ENCODE measurements at regions of chr4 and their contacts with region 1.

Region 1: GRCh38 chr4:44817930-44818329 is 91.6 kb upstream of the GNPDA2 start:
- DNase-seq: no peak
- ATAC-seq: peak; percentile 67 to 96 (median 91)
- H3K4me3 ChIP-seq: no peak overlapping the region
- H3K27ac ChIP-seq: peak overlapping the region; percentile 44 to 86 (median 73)
- H3K4me1 ChIP-seq: peaks cover 0 to 7% (median 0%) of the 10 kb centered on the region in 9 donors
- H3K27me3 ChIP-seq: no peaks in the 10 kb centered on the region
- CTCF ChIP-seq: no peak

Region 2: DNA sequence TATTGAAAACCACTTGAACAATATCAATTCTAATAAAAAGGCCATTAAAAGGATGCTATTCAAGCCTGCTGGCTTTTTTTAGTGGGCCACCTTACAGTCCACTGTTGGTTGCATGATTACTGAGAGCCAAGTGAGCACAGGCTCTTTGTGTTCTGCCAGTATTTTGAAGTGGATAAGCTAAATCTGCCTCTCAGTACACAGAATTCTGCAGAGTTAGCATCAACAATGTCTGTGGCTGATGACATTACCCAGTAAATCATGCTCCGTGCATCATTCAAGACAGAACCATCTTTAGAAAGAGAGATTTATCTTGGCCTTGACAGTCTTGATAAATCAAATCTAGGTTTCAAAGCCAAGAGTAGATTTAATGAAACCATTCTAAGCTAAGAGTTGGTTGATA is 27.4 kb after region 1 on chr4:
- intact Hi-C with region 1: loop called in 1 of 10 experiments (anchors 2 kb)
- DNase-seq: no peak
- ATAC-seq: peak; percentile 69 to 98 (median 90)
- H3K4me3 ChIP-seq: no peak overlapping the region
- H3K27ac ChIP-seq: peak overlapping the region in 8 of 10 donors; percentile 12 to 81 (median 63)
- H3K4me1 ChIP-seq: peaks cover 0 to 18% (median 0%) of the 10 kb centered on the region in 9 donors
- H3K27me3 ChIP-seq: no peaks in the 10 kb centered on the region
- CTCF ChIP-seq: no peak

Region 3: GRCh38 chr4:44859477-44859876 is 41.5 kb after region 1 on chr4:
- intact Hi-C with region 1: no loop called
- DNase-seq: no peak
- ATAC-seq: peak in 3 of 8 donors; percentile 54 to 72 (median 55)
- H3K4me3 ChIP-seq: no peak overlapping the region
- H3K27ac ChIP-seq: peak overlapping the region in 1 of 10 donors; percentile 20
- H3K4me1 ChIP-seq: peaks cover 0 to 13% (median 0%) of the 10 kb centered on the region in 9 donors
- H3K27me3 ChIP-seq: no peaks in the 10 kb centered on the region
- CTCF ChIP-seq: no peak

Measured in heart right ventricle (tissue), 16 donors.